CD8-positive, alpha-beta T cell (primary cell): ENCODE measurements at regions of chr11 and their contacts with region 1.

Region 1: GRCh38 chr11:3797329-3798095 is at the start of gene NUP98:
- DNase-seq: peak; percentile 99 to 100 (median 99)
- ATAC-seq: peak; percentile 92
- H3K4me3 ChIP-seq: peak within 1 kb of the TSS; percentile 80 to 96
- H3K4me3 Mint-ChIP-seq: peak within 1 kb of the TSS; percentile 96
- H3K27ac ChIP-seq: peak within 1 kb of the TSS; percentile 94 to 99
- H3K27ac Mint-ChIP-seq: peak within 1 kb of the TSS; percentile 100
- H3K4me1 ChIP-seq: peaks cover 37% of the 10 kb centered on the region
- H3K4me1 Mint-ChIP-seq: peaks cover 47% of the 10 kb centered on the region
- H3K27me3 ChIP-seq: no peaks in the 10 kb centered on the region
- H3K27me3 Mint-ChIP-seq: no peaks in the 10 kb centered on the region
- CTCF ChIP-seq: no peak
- total RNA-seq, gene NUP98: 204 to 210 TPM

Region 2: DNA sequence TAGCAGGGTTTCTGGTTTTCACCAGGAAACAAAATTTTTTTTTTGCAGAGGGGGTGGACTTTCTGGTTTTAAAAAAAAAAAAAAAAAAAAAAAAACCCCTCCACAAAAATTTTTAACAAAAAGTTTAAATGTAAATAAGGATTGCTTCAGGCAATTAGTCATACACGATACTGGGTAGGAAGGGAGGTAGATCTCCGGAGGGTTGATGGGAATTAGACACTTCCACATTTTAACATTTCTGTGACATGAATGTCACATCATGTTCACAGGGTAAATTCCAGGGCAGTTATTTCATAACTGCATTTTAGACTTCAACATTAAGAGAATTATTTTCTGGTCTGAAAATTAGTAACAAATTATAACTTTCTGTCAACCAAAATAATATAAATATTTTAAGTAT is 16.1 kb before region 1 on chr11:
- CTCF ChIA-PET with region 1: interaction called, 7 read pairs
- POLR2A ChIA-PET with region 1: interaction called, 6 read pairs
- intact Hi-C with region 1: loop called in 1 of 2 experiments (anchors 1 kb)
- DNase-seq: peak in 1 of 9 experiments; percentile 32
- ATAC-seq: no peak
- H3K4me3 ChIP-seq: no peak overlapping the region
- H3K4me3 Mint-ChIP-seq: no peak overlapping the region
- H3K27ac ChIP-seq: no peak overlapping the region
- H3K27ac Mint-ChIP-seq: no peak overlapping the region
- H3K4me1 ChIP-seq: peaks cover 34% of the 10 kb centered on the region
- H3K4me1 Mint-ChIP-seq: peaks cover 48% of the 10 kb centered on the region
- H3K27me3 ChIP-seq: no peaks in the 10 kb centered on the region
- H3K27me3 Mint-ChIP-seq: no peaks in the 10 kb centered on the region
- CTCF ChIP-seq: no peak

Region 3: GRCh38 chr11:4094348-4095291 is 297.1 kb after region 1 on chr11 and contains the start of gene RRM1:
- CTCF ChIA-PET with region 1: no interaction called
- POLR2A ChIA-PET with region 1: interaction called, 3 read pairs
- intact Hi-C with region 1: loop called in 1 of 2 experiments (anchors 1 kb)
- DNase-seq: peak; percentile 84 to 97 (median 92)
- ATAC-seq: peak; percentile 90
- H3K4me3 ChIP-seq: peak within 1 kb of the TSS; percentile 74 to 78
- H3K4me3 Mint-ChIP-seq: peak within 1 kb of the TSS; percentile 98
- H3K27ac ChIP-seq: peak within 1 kb of the TSS; percentile 81 to 86
- H3K27ac Mint-ChIP-seq: peak within 1 kb of the TSS; percentile 99
- H3K4me1 ChIP-seq: peaks cover 49% of the 10 kb centered on the region
- H3K4me1 Mint-ChIP-seq: peaks cover 79% of the 10 kb centered on the region
- H3K27me3 ChIP-seq: no peaks in the 10 kb centered on the region
- H3K27me3 Mint-ChIP-seq: no peaks in the 10 kb centered on the region
- CTCF ChIP-seq: no peak
- total RNA-seq, gene RRM1: 53.1 to 57.3 TPM

Region 4: DNA sequence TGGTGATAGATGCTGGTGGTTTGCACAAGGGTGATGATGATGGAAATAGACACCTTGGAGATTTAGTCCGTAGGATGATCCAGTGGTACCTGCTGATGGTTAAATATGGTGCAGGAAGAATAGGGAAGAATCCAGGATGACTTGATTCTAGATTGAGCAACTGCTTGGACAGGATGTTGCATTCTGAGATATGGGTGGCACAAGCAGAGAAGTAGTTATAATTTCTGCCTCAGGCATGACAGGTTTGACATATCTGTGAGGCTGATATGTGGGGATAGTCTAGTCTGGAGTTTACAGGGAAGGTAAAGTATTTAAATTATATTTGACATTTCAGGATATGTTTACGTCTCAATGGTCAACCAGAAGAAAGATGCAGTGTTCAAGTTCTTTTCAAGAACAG is 672.4 kb after region 1 on chr11:
- CTCF ChIA-PET with region 1: no interaction called
- POLR2A ChIA-PET with region 1: no interaction called
- intact Hi-C with region 1: no loop called
- DNase-seq: no peak
- ATAC-seq: no peak
- H3K4me3 ChIP-seq: no peak overlapping the region
- H3K4me3 Mint-ChIP-seq: no peak overlapping the region
- H3K27ac ChIP-seq: no peak overlapping the region
- H3K27ac Mint-ChIP-seq: no peak overlapping the region
- H3K4me1 ChIP-seq: no peaks in the 10 kb centered on the region
- H3K4me1 Mint-ChIP-seq: no peaks in the 10 kb centered on the region
- H3K27me3 ChIP-seq: no peaks in the 10 kb centered on the region
- H3K27me3 Mint-ChIP-seq: peaks cover 8% of the 10 kb centered on the region
- CTCF ChIP-seq: no peak